Left cardiac atrium (tissue), 4 donors: ENCODE measurements at regions of chr2 and their contacts with region 1.

Region 1: GRCh38 chr2:9967053-9967775 is 15.7 kb downstream of the GRHL1 start:
- DNase-seq: no peak
- ATAC-seq: no peak

Region 2: DNA sequence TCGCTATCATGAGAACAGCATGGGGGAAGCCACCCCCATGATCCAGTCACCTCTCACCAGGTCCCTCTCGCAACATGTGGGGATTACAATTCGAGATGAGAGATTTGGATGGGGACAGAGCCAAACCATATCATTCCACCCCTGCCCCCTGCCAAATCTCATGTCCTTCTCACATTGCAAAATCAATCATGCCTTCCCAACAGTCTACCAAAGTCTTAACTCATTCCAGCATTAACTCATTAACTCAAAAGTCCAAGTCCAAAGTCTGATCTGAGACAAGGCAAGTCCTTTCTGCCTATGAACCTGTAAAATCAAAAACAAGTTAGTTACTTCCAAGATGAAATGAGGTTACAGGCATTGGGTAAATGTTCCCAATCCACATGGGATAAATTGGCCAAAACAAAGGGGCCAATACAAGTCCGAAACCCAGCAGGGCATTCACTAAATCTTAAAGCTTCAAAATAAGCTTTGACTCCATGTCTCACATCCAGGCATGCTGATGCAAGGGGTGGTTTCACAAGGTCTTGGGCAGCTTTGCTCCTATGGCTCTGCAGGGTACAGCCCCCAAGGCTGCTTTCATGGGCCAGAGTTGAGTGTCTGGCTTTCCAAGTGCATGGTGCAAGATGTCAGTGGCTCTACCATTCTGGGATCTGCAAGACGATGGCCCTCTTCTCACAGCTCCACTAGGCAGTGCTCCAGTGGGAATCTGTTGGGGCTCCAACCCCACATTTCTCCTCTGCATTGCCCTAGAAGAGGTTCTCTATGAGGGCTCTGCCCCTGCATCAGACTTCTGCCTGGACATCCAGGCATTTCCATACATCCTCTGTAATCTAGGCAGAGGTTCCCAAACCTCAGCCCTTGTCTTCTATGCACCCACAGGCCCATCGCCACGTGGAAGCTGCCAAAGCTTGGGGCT is 109.1 kb before region 1 on chr2:
- intact Hi-C with region 1: loop called in 1 of 2 experiments (anchors 10 kb)
- DNase-seq: no peak
- ATAC-seq: no peak

Region 3: DNA sequence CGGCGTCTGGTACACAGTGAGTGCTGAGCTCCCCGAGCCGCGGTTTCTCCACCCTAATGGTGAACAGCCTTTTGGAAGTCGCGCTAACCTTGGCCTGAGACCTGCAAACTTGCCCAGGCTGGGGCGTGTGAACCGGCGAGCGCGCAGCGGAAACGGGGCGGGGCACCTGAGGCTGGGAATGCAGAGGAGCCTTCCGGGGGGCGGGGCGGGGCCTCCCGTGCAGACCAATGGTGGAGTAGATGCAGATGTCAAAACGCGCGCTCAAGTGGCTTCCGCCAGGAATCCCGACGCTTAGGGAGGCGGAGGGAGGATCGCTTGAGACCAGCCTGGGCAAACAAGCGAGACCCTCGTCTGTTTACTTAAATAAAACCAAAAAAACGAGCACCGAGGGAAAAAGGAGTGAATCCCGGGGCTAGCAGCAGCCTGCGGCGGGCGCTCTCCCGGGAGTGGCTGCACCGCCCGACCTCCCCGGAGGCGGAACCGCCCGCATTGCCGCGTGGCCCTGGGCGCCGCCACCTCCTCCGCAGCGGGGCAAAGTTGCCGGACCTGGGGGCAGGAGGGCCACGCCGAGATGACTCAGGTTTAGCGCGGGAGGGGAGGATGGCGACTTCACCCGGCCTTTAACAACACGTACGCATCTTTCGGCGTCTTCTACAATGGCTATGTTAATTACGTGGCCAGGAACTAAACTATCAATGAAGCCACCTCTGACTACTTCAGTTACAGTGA is 153.1 kb after region 1 on chr2:
- intact Hi-C with region 1: no loop called
- DNase-seq: peak; percentile 96
- ATAC-seq: peak; percentile 91 to 94

Region 4: GRCh38 chr2:10333242-10333613 is 366.0 kb after region 1 on chr2:
- intact Hi-C with region 1: no loop called
- DNase-seq: no peak
- ATAC-seq: no peak